CD4-positive, alpha-beta T cell (primary cell): ENCODE measurements at regions of chr3 and their contacts with region 1.

Region 1: GRCh38 chr3:45841757-45842491 is at the start of gene LZTFL1:
- DNase-seq: peak; percentile 80 to 96 (median 84)
- ATAC-seq: peak; percentile 85
- H3K4me3 ChIP-seq: peak within 1 kb of the TSS; percentile 79
- H3K4me3 Mint-ChIP-seq: peak within 1 kb of the TSS; percentile 96
- H3K27ac ChIP-seq: peak within 1 kb of the TSS; percentile 69 to 83
- H3K27ac Mint-ChIP-seq: peak within 1 kb of the TSS; percentile 94
- H3K4me1 ChIP-seq: peaks cover 17% of the 10 kb centered on the region
- H3K4me1 Mint-ChIP-seq: peaks cover 35% of the 10 kb centered on the region
- H3K27me3 ChIP-seq: no peaks in the 10 kb centered on the region
- H3K27me3 Mint-ChIP-seq: no peaks in the 10 kb centered on the region
- CTCF ChIP-seq: no peak
- total RNA-seq, gene LZTFL1: 9.6 to 10.0 TPM

Region 2: DNA sequence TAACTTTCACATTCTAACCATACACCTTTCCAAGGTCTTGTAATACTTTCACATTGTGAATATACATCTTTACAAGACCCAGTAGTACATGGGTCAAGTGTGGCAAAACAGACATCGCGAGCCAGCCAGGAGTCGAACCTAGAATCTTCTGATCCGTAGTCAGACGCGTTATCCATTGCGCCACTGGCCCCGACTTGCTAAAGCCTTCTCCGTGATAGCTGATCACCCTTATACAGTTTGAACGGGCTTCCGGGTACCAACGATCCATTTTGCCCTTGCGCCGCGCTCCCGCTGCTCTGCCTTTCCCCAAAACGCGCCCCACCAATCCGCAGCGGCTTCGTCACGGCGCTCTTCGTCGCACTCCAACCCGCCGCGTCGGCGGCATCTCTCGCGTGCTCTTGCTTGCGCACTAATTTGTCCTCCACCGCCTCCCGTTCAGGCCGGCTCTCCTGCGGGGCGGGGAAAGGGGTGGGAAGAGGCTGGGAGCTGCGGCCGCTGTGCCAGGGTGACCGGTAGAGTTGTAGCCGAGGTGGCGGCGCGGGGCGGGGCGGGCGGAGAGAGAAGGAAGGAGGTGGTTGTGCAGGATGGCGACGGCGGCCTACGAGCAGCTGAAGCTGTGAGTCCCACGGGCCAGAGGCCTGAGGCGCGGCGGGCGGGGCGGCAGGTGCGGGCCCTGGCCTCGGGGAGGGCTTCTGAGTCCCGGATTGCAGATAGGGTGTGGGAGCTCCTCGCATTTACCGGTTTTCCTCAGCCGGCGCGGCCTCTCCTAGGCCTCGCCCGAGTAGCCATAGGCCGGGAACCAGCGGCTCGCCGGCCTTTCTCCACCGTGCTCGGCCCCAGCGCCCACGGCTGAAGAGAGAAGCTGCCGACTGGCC is 152.8 kb before region 1 on chr3 and contains the start of gene SACM1L:
- CTCF ChIA-PET with region 1: no interaction called
- POLR2A ChIA-PET with region 1: interaction called, 4 read pairs
- intact Hi-C with region 1: loop called in 1 of 2 experiments (anchors 5 kb)
- DNase-seq: peak; percentile 88 to 99 (median 93)
- ATAC-seq: peak; percentile 85
- H3K4me3 ChIP-seq: peak within 1 kb of the TSS; percentile 81
- H3K4me3 Mint-ChIP-seq: peak within 1 kb of the TSS; percentile 94
- H3K27ac ChIP-seq: peak within 1 kb of the TSS; percentile 90 to 91
- H3K27ac Mint-ChIP-seq: peak within 1 kb of the TSS; percentile 99
- H3K4me1 ChIP-seq: peaks cover 39% of the 10 kb centered on the region
- H3K4me1 Mint-ChIP-seq: peaks cover 69% of the 10 kb centered on the region
- H3K27me3 ChIP-seq: no peaks in the 10 kb centered on the region
- H3K27me3 Mint-ChIP-seq: peaks cover 7% of the 10 kb centered on the region
- CTCF ChIP-seq: no peak
- total RNA-seq, gene SACM1L: 41.9 to 44.3 TPM

Region 3: DNA sequence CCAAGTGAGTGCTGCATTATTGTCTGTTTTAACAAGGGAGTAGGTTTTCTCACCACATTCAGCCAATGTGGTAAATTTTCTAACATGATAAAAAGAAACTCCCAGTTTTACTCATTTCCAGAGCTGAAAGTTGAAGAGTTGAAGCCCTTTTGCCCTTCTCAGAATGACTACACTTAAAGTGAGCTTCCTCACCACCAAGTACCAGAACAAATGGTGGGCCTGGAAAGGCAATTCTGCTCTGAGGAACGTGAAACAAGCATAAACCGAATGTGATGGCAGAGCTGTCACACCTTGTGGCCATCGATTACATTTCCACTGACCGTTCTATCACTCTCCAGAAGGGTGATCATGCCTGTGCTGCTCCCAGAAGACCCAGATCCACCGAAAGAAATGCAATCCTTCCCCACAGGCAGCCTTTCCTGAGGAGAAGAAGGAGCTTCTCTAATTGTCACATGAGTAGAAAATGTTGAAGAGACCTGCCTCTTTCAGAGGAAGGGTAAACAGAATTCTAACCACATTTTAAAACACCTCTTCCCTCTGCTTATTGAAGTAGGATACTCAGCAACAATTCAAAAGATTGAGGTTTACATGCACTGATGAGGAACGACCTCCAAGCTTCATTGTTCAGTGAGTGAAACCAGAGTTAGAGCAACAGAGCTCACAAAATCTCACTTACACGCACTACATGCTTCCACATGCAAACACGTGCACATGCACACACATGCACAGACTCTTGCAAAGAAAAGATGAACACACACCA is 23.0 kb after region 1 on chr3:
- CTCF ChIA-PET with region 1: no interaction called
- POLR2A ChIA-PET with region 1: interaction called, 24 read pairs
- intact Hi-C with region 1: loop called (anchors 1 to 2 kb)
- DNase-seq: peak in 3 of 14 experiments; percentile 31 to 48 (median 33)
- ATAC-seq: peak; percentile 38
- H3K4me3 ChIP-seq: no peak overlapping the region
- H3K4me3 Mint-ChIP-seq: no peak overlapping the region
- H3K27ac ChIP-seq: no peak overlapping the region
- H3K27ac Mint-ChIP-seq: peak overlapping the region; percentile 34
- H3K4me1 ChIP-seq: peaks cover 24% of the 10 kb centered on the region
- H3K4me1 Mint-ChIP-seq: peaks cover 80% of the 10 kb centered on the region
- H3K27me3 ChIP-seq: peaks cover 0 to 8% of the 10 kb centered on the region in 2 experiments
- H3K27me3 Mint-ChIP-seq: peaks cover 22% of the 10 kb centered on the region
- CTCF ChIP-seq: no peak

Region 4: GRCh38 chr3:45870099-45870498 is 28.2 kb after region 1 on chr3:
- CTCF ChIA-PET with region 1: no interaction called
- POLR2A ChIA-PET with region 1: interaction called, 24 read pairs
- intact Hi-C with region 1: loop called (anchors 1 to 2 kb)
- DNase-seq: peak; percentile 51 to 93 (median 64)
- ATAC-seq: peak; percentile 90
- H3K4me3 ChIP-seq: no peak overlapping the region
- H3K4me3 Mint-ChIP-seq: peak overlapping the region; percentile 1
- H3K27ac ChIP-seq: no peak overlapping the region
- H3K27ac Mint-ChIP-seq: peak overlapping the region; percentile 34
- H3K4me1 ChIP-seq: peaks cover 35% of the 10 kb centered on the region
- H3K4me1 Mint-ChIP-seq: peaks cover 69% of the 10 kb centered on the region
- H3K27me3 ChIP-seq: peaks cover 0 to 3% of the 10 kb centered on the region in 2 experiments
- H3K27me3 Mint-ChIP-seq: peaks cover 3% of the 10 kb centered on the region
- CTCF ChIP-seq: no peak

Region 5: GRCh38 chr3:45884368-45885201 is 42.7 kb after region 1 on chr3:
- CTCF ChIA-PET with region 1: no interaction called
- POLR2A ChIA-PET with region 1: no interaction called
- intact Hi-C with region 1: loop called in 1 of 2 experiments (anchors 5 kb)
- DNase-seq: no peak
- ATAC-seq: no peak
- H3K4me3 ChIP-seq: no peak overlapping the region
- H3K4me3 Mint-ChIP-seq: no peak overlapping the region
- H3K27ac ChIP-seq: no peak overlapping the region
- H3K27ac Mint-ChIP-seq: peak overlapping the region; percentile 50
- H3K4me1 ChIP-seq: peaks cover 33% of the 10 kb centered on the region
- H3K4me1 Mint-ChIP-seq: peaks cover 40% of the 10 kb centered on the region
- H3K27me3 ChIP-seq: no peaks in the 10 kb centered on the region
- H3K27me3 Mint-ChIP-seq: no peaks in the 10 kb centered on the region
- CTCF ChIP-seq: no peak

Region 6: DNA sequence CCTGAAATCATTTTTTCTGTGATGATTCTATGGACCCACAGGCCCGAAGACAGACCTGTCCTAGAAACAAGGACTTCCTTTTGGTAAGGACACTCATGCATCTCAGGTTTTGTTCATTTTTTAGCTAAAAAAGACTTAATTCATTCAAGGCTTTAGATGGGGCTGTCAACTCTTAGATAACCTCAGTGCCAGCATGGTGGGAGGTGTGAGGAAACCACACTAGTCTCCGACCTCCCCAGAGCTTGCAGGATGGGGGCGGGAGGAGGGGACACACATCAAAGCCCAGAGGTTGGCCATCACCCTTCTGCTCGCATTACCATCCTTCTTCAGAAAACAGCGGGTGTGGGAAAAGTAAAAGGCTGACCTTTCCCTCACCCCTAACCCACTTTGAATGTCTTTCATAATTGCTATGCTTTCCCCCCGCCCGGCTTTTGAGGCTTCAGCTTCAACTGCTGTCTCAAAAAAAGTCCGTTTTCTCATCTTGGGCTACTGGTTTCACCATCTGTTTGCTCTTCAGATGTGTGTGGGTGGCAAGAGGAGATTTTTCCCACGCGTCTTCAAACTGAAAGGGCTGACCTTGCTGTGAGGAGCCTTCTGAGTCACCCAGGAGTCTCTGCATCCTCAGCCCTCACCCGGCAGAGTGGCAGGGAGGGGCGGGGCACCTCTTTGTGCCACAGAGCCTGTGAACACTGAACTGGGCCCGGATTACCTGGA is 73.8 kb after region 1 on chr3:
- CTCF ChIA-PET with region 1: no interaction called
- POLR2A ChIA-PET with region 1: interaction called, 3 read pairs
- intact Hi-C with region 1: loop called (anchors 2 to 5 kb)
- DNase-seq: peak; percentile 47 to 85 (median 68)
- ATAC-seq: peak; percentile 88
- H3K4me3 ChIP-seq: peak overlapping the region; percentile 42
- H3K4me3 Mint-ChIP-seq: peak overlapping the region; percentile 87
- H3K27ac ChIP-seq: peak overlapping the region in 1 of 2 donors; percentile 47
- H3K27ac Mint-ChIP-seq: peak overlapping the region; percentile 72
- H3K4me1 ChIP-seq: peaks cover 55% of the 10 kb centered on the region
- H3K4me1 Mint-ChIP-seq: peaks cover 49% of the 10 kb centered on the region
- H3K27me3 ChIP-seq: no peaks in the 10 kb centered on the region
- H3K27me3 Mint-ChIP-seq: no peaks in the 10 kb centered on the region
- CTCF ChIP-seq: no peak

Region 7: DNA sequence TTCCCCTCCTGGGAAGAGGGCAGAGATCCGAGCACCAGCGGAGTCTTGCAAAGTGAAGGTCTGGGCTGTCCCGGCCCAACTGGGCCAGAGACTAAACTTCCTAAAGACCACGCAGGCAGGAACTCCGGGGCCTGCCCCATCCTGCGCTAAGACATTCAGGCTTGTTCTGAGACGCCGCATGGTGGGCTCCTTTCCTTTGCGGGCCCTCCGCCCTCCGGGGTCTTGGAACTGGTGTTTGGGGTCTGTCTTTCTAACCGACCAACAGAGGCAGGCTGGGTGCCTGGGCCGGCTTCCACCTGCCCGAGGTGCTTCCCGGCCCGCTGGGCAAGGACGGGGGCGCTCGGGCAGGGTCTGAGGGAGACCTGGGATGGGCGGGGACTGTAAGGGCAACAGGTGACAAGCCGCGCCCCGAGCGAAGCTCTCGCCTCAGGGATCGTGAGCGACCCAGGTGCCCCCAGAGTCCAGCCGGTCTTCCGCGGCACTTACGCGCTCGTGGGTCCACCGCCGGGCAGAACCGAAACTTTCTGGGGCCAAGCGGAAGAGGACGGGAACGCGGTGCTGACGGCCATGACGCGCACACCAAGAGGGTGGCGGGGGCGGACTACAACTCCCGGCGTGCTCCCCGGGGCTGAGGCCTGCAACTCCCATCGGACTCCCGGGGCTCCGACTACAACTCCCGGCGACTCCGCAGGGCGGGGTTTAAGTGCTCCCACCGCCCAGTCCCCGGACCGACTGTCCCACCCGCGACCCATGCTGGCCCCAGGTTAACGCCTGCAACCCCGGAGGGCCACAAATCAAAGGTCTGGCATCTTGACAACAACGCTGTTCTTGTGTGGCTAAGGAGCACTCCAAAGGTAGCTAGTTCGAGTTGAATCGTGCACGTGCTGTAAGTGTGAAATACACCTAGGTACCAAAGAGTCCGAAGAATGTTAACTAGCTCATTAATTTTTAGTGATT is 153.6 kb after region 1 on chr3 and contains the start of gene FYCO1:
- CTCF ChIA-PET with region 1: no interaction called
- POLR2A ChIA-PET with region 1: no interaction called
- intact Hi-C with region 1: loop called in 1 of 2 experiments (anchors 5 kb)
- DNase-seq: peak; percentile 78 to 94 (median 84)
- ATAC-seq: peak; percentile 84
- H3K4me3 ChIP-seq: peak within 1 kb of the TSS; percentile 87
- H3K4me3 Mint-ChIP-seq: peak within 1 kb of the TSS; percentile 94
- H3K27ac ChIP-seq: peak within 1 kb of the TSS; percentile 75 to 90
- H3K27ac Mint-ChIP-seq: peak within 1 kb of the TSS; percentile 92
- H3K4me1 ChIP-seq: peaks cover 50% of the 10 kb centered on the region
- H3K4me1 Mint-ChIP-seq: peaks cover 51% of the 10 kb centered on the region
- H3K27me3 ChIP-seq: no peaks in the 10 kb centered on the region
- H3K27me3 Mint-ChIP-seq: no peaks in the 10 kb centered on the region
- CTCF ChIP-seq: no peak
- total RNA-seq, gene FYCO1: 17.4 to 20.1 TPM

Region 8: GRCh38 chr3:46017720-46018119 is 175.8 kb after region 1 on chr3:
- CTCF ChIA-PET with region 1: no interaction called
- POLR2A ChIA-PET with region 1: no interaction called
- intact Hi-C with region 1: no loop called
- DNase-seq: peak in 2 of 14 experiments; percentile 58 to 68
- ATAC-seq: no peak
- H3K4me3 ChIP-seq: no peak overlapping the region
- H3K4me3 Mint-ChIP-seq: no peak overlapping the region
- H3K27ac ChIP-seq: no peak overlapping the region
- H3K27ac Mint-ChIP-seq: no peak overlapping the region
- H3K4me1 ChIP-seq: no peaks in the 10 kb centered on the region
- H3K4me1 Mint-ChIP-seq: peaks cover 8% of the 10 kb centered on the region
- H3K27me3 ChIP-seq: no peaks in the 10 kb centered on the region
- H3K27me3 Mint-ChIP-seq: peaks cover 6% of the 10 kb centered on the region
- CTCF ChIP-seq: no peak